ENCODE measurements at regions of chr10 and their contacts with region 1.

Region 1: DNA sequence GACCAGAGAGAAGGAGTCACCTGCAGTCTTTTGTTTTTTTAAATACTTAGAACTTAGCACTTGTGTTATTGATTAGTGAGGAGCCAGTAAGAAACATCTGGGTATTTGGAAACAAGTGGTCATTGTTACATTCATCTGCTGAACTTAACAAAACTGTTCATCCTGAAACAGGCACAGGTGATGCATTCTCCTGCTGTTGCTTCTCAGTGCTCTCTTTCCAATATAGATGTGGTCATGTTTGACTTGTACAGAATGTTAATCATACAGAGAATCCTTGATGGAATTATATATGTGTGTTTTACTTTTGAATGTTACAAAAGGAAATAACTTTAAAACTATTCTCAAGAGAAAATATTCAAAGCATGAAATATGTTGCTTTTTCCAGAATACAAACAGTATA is 13.5 kb downstream of the GHITM start:
- DNase-seq: no peak
- H3K4me3 ChIP-seq: no peak overlapping the region
- H3K4me3 Mint-ChIP-seq: no peak overlapping the region
- H3K27ac ChIP-seq: no peak overlapping the region
- H3K27ac Mint-ChIP-seq: peak overlapping the region in 1 of 7 donors; percentile 43
- H3K4me1 ChIP-seq: no peaks in the 10 kb centered on the region
- H3K4me1 Mint-ChIP-seq: peaks cover 2 to 12% (median 8%) of the 10 kb centered on the region in 4 donors
- H3K27me3 ChIP-seq: no peaks in the 10 kb centered on the region
- H3K27me3 Mint-ChIP-seq: no peaks in the 10 kb centered on the region

Region 2: DNA sequence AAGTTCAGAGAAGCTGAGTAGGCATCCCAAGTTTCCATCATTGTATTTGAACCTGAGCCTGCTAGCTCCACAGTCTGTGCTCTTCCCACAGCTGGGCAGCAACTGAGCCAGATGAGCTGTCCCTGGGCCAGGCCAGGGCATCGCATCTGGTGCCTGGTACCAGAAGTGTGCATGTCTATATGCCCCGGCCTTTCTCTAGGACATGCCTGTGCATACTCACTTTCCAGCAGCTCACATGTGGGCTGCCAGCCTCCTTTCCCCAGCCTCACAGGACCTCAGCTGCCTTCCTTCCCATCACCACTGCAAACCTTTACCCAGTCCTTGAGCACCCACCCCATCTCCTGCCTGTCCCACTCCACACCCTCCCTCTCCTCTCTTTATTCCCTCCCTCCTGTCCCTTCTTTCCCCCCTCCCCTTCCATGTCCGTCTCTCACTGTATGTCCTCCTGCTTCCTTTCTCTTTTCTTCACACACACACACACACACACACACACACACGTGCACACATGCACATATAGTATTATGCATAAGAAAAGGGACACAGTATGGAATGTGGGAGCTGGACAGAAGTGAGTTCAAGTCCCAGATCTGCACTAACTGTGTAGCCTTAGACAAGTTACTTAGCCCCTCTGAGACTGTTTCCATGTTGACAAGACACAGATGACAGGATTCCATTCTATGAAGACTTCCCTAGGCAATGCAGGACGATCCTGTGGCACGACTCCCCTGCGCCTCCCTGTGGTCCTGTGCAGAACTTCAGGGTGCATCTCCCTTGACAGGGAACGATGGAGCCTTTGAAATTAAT is 52.5 kb after region 1 on chr10:
- CTCF ChIA-PET with region 1: interaction called, 75 read pairs
- POLR2A ChIA-PET with region 1: no interaction called
- intact Hi-C with region 1: loop called (anchors 1 kb)
- DNase-seq: peak; percentile 38 to 62 (median 56)
- H3K4me3 ChIP-seq: no peak overlapping the region
- H3K4me3 Mint-ChIP-seq: no peak overlapping the region
- H3K27ac ChIP-seq: no peak overlapping the region
- H3K27ac Mint-ChIP-seq: no peak overlapping the region
- H3K4me1 ChIP-seq: no peaks in the 10 kb centered on the region
- H3K4me1 Mint-ChIP-seq: peaks cover 0 to 2% (median 0%) of the 10 kb centered on the region in 4 donors
- H3K27me3 ChIP-seq: no peaks in the 10 kb centered on the region
- H3K27me3 Mint-ChIP-seq: peaks cover 9 to 15% of the 10 kb centered on the region in 2 donors

Measured in CD4-positive, alpha-beta memory T cell (primary cell).